GM10248 (cell line): ENCODE measurements at regions of chr5 and their contacts with region 1.

Region 1: DNA sequence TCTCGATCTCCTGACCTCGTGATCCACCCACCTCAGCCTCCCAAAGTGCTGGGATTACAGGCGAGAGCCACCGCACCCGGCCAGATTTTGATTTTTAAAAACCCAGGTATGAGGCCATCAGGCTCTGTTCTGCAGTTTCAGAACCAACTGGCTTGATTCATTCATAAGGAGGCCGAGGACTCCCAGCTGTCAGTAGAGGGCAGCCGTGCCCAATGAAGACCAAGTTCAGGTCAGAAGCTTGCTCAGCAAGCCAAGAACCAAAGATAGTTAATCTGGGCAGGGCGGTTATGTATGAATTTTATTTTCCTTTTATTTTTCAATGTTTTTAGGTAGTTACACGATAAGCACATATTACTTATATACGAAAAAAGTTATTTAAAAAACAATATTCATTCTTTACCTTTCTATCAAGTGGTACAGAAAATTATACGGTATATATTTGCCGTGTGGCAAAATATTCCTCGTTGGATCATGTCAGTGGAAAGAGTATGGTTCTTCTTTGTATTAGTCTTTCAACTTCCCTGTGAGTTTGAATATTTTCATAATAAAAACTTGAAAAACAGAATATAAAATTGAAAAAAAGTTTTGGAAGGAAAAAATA is 18.0 kb downstream of the MGAT1 start:
- DNase-seq: peak; percentile 83
- CTCF ChIP-seq: peak; percentile 82

Region 2: DNA sequence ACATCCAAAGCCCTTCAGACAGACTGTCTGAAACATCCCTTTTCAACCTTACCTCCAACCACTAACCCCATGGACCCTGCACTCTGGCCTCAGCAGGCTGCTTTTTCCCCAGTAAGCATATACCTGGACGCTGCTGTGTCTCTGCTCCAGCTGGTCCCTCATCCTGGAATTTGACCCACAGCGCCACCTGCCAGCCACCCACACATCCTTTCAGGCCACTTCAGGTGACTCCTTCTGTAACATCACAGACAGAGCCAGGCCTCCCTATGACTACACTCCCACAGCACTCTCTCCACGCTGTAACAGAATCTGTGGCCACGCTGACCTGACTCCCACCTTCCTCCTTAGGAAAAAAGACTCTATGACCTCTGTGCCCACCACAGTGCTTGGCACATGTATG is 14.6 kb after region 1 on chr5:
- CTCF ChIA-PET with region 1: interaction called, 12 read pairs
- POLR2A ChIA-PET with region 1: no interaction called
- DNase-seq: no peak
- CTCF ChIP-seq: no peak

Region 3: DNA sequence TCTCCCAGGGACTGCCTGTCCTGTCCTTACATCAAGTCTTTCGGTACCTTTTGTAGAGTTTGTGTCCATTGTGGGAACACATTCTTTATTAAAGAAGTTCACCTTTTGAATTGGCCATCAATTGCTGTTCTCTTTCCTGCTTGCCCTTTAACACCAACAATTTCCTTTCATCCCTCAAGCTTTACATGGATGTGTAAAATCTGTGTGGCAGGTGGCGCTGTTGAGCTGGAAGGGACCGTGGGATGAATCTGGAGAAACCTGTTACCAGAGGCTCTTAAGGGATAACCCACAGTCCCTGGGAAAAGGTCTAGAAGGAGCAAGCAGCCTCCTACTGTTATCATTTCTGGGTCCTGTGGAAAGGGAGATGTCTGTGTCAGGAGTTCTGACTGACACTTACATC is 84.4 kb after region 1 on chr5:
- CTCF ChIA-PET with region 1: interaction called, 13 read pairs
- POLR2A ChIA-PET with region 1: no interaction called
- DNase-seq: peak; percentile 50
- CTCF ChIP-seq: peak; percentile 79

Region 4: GRCh38 chr5:180960209-180960608 is 175.6 kb after region 1 on chr5:
- CTCF ChIA-PET with region 1: no interaction called
- POLR2A ChIA-PET with region 1: no interaction called
- DNase-seq: no peak
- CTCF ChIP-seq: no peak